Activated B cell treated with CpG ODN at 0.5 μM for 24 hours (primary cell): ENCODE measurements at regions of chr7 and their contacts with region 1.

Region 1: DNA sequence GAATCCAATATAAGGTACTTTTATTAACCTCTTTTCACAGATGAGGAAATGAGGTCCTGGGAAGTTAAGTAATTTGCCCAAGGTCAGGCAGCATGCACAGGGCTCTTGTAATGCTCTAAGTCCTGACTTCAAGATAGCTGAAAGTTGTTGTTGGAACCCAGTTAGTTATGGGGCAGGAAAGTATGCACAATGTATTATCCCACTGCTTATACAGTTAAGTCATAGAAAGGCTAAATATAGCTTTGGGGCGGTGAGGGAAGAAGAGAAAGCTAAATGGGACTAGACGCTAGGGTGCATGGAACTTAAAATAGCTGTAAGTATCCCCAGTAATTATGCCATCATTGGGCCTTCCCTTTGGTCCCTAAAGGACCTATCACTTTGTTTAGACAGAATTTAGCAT is 9.2 kb downstream of the GLCCI1 start:
- DNase-seq: no peak
- ATAC-seq: no peak
- H3K4me3 Mint-ChIP-seq: no peak overlapping the region
- H3K27ac Mint-ChIP-seq: no peak overlapping the region
- H3K4me1 Mint-ChIP-seq: peaks cover 61% of the 10 kb centered on the region
- H3K27me3 Mint-ChIP-seq: no peaks in the 10 kb centered on the region
- CTCF ChIP-seq: no peak

Region 2: GRCh38 chr7:7989133-7989984 is 11.6 kb after region 1 on chr7:
- CTCF ChIA-PET with region 1: no interaction called
- POLR2A ChIA-PET with region 1: no interaction called
- intact Hi-C with region 1: loop called (anchors 1 kb)
- DNase-seq: no peak
- ATAC-seq: no peak
- H3K4me3 Mint-ChIP-seq: peak overlapping the region; percentile 33
- H3K27ac Mint-ChIP-seq: peak overlapping the region; percentile 36
- H3K4me1 Mint-ChIP-seq: peaks cover 50% of the 10 kb centered on the region
- H3K27me3 Mint-ChIP-seq: no peaks in the 10 kb centered on the region
- CTCF ChIP-seq: no peak

Region 3: DNA sequence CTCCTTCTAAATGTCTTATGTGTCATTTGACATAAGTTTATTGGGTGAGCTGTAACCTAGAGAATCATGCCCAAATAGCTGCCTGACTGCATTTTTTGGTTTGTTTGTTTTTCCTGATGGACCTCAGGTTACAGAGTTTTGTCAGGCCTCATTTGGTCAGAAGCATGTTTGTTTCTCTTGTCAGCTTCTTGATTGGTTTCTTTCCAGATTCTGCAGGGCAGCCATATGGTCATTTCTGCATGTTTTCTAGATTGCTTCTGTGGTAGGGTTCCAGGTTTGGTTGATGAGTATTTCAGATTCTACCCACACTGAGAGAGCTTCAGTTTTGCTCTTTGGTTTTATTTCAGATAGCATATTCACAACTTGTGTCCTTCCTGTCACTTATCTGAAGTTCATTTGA is 18.8 kb after region 1 on chr7:
- CTCF ChIA-PET with region 1: no interaction called
- POLR2A ChIA-PET with region 1: no interaction called
- intact Hi-C with region 1: loop called (anchors 2 kb)
- DNase-seq: no peak
- ATAC-seq: no peak
- H3K4me3 Mint-ChIP-seq: no peak overlapping the region
- H3K27ac Mint-ChIP-seq: no peak overlapping the region
- H3K4me1 Mint-ChIP-seq: peaks cover 6% of the 10 kb centered on the region
- H3K27me3 Mint-ChIP-seq: no peaks in the 10 kb centered on the region
- CTCF ChIP-seq: no peak